Sciatic nerve (tissue), 2 donors: ENCODE measurements at regions of chr12 and their contacts with region 1.

Region 1: GRCh38 chr12:132414634-132415326 is 75.2 kb upstream of the FBRSL1 start:
- DNase-seq: peak; percentile 91
- ATAC-seq: peak; percentile 94

Region 2: DNA sequence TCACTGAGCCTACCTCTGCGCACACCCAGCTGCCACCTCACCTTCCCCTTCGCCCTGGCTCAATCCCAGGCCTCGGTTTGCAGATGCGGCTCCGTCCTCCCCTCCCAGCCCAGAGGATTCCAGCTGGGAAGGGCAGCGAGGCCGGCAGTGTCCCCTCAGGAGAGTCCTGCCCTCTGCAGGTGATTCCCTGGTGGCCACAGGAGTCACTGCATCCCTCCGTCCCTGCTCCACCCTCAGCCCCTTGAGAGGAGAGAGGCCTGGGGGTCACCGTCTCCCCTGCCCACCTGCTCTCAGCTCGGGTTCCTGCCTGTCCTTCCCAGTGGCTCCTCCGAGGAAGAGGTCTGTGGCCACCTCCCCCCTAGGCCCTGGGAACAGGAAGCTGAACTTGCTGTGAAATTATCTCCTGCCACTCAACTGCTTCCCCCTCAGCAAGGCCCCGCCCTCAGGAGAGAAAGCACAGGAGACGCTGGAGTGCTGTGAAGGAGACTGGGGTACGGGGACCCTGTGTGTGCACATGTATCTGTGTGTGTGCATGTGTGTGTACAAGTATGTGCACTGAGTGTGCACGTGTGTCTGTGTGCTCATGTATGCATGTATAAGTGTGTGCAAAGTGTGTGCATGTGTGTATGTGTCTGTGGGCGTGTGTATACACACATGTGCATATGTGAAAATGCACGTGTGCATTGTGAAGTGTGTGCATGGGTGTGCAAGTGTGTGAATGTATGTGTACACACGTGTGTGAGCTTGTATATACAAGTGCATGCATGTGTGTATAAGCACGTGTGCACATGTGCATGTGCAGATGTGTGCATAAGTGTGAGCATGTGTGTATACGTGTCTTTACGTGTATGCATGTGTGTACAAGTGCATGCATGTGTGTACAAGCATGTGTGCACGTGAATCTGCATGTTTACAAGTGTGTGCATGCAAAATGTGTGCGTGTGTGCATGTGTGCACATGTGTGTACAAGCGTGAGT is 72.2 kb before region 1 on chr12:
- intact Hi-C with region 1: no loop called
- DNase-seq: no peak
- ATAC-seq: no peak

Region 3: DNA sequence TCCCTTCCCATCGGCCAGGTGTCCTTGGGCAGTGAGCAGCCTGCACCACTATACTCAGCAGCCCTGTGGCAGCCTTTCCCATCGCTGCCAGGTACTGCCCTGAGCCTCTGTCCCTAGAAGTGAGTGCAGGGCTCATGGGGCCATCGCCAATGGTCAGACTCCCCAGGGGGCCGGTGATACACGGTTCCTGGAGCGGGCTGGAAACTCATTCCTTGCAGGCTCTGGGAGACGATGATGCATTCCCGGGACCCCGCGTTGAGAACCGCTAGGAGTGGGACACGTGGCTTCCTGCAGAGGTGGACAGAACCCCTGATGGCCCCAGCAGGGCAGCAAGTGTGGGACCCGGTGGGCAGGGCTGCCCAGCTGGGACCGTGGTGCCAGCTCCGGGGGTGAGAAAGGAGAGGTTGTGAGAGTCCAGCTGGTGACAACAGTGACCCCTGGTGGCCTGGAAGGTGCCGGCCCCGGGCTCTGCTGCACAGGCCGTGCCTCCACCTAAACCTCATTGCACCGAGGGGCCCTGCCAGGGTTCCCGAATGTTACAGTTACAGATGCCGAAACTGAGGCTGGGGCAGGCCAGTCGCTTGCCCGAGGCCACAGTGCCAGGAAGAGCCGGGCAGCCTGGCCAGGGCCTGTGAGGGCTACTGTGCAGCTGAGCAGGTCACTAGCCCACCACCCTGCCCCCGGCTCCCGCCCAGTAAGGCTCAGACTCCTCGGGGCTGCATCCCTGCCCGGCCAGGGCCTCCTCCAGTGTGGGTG is 109.0 kb after region 1 on chr12:
- intact Hi-C with region 1: loop called (anchors 10 kb)
- DNase-seq: peak; percentile 86
- ATAC-seq: peak; percentile 73

Region 4: DNA sequence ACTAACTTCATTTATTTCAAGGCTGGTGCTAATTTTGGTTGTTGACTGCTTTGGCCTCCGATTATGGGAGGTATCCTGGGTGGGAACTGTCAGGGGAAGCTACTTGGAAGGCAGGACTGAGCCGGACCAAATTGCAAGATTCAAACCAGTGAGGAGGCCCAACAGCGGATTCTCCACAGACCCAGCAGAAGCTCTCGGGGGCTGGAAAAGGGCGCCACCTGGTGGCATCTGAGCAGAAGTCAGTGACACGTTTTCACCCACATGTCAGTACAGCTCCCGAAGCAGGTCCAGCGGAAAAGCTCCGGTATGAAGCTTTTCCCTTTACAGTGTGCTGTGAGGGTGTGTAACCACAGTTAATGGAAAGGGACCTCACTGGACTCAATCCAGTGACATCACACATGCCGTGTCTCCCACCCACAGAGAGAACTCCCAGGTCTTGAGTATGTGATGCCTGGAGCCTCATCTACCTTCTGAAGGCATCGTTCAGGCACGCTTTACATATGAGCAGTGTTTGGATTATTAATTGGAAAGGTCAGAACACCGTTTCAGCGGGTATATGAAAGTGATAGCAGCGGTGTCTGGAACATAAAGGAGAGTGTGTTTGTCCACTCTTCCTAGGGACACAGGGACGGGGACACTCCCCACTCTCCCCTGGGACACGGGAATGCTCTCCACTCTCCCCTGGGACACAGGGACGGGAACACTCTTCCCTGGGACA is 200.2 kb after region 1 on chr12:
- intact Hi-C with region 1: loop called (anchors 1 kb)
- DNase-seq: peak; percentile 91
- ATAC-seq: peak; percentile 93